Activated CD4-positive, alpha-beta memory T cell treated with anti-CD3 and anti-CD28 coated beads, Interleukin-2, amount 10 ng/mL, durations not matched to agents 7 days and 5 days (primary cell): ENCODE measurements at regions of chr17 and their contacts with region 1.

Region 1: DNA sequence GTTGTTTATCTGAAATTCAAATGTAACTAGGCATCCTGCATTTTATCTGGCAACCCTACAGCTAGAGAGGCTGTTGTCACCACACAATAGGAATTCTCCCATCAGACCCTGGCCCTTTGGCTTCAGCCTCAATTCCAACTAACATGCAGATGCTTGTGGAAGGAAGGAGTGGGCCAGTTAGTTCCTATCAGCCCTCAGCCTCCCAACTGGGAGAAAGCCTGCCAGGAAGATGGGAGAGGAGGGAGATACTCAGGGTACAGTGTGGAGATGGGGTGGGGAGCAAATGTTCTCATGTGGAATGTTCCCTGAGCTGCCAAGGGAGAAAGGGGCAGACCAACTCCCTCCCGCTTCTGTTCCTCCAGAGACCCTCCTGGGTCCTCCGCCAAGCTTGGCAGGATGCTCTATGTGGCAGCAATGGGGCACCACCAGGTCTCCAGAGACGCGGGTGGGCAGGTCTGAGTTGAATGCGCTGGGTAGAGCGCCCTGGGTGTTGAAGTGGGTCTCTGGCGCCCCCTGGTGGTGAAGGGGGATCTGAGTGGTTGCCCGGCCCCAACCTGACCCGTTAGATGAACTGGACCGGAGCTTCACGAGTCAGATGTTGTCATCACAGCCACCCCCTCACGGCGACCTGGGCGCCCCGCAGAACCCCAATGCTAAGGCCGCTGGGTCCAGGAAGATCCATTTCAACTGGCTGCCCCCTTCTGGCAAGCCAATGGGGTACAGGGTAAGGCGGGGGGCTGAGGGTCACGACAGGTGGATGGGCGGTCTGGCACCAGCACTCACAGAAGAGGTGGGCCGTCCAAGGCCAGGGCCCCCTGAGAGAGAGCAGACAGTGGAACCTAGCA is 15.2 kb downstream of the GALK1 start:
- DNase-seq: peak; percentile 88
- H3K4me3 Mint-ChIP-seq: no peak overlapping the region
- H3K27ac Mint-ChIP-seq: no peak overlapping the region
- H3K4me1 Mint-ChIP-seq: peaks cover 19% of the 10 kb centered on the region
- H3K27me3 Mint-ChIP-seq: peaks cover 9% of the 10 kb centered on the region

Region 2: GRCh38 chr17:75557075-75557882 is 192.5 kb before region 1 on chr17:
- CTCF ChIA-PET with region 1: no interaction called
- POLR2A ChIA-PET with region 1: no interaction called
- DNase-seq: no peak
- H3K4me3 Mint-ChIP-seq: no peak overlapping the region
- H3K27ac Mint-ChIP-seq: no peak overlapping the region
- H3K4me1 Mint-ChIP-seq: no peaks in the 10 kb centered on the region
- H3K27me3 Mint-ChIP-seq: no peaks in the 10 kb centered on the region

Region 3: DNA sequence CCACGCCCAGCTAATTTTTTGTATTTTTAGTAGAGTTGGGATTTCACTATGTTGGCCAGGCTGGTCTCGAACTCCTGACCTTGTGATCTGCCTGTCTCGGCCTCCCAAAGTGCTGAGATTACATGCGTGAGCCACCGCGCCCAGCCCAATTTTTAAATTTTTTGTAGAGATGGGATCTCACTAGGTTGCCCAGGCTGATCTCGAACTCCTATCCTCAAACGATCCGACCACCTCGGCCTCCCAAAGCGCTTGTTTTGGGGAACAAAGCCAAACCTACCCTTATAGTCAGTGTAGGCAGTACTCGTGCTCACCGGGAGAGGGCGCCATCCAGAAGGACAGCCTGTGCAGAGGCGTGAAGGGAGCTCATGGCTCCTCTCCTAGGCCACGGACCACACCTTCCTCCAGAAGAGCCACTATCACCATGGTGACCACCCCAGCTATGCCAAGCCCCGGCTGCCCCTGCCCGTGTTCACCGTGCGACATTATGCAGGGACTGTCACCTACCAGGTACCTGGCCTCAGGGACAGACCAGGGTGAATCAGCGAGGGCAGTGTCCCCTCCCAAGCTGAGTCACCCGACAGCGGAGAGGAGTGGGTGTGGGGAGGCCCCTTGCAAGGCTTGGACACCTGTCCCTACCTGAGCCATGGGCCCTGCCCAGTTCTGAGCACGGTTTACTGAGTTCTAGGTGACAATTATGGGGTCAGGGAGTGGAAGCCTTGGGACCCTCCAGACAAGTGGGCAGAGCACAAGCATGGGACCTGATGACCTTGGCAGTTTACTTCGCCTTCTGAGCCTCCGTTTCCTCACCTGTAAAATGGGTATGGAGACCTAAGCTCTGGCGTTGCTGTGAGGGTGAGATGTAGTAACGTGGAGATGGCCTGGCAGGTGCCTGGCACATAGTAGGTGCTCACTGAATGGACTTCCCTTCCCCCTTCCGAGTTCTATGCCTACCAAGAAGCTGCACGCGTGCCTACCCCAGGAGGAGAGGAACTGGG is 148.4 kb before region 1 on chr17:
- CTCF ChIA-PET with region 1: interaction called, 21 read pairs
- POLR2A ChIA-PET with region 1: no interaction called
- DNase-seq: peak; percentile 74
- H3K4me3 Mint-ChIP-seq: no peak overlapping the region
- H3K27ac Mint-ChIP-seq: no peak overlapping the region
- H3K4me1 Mint-ChIP-seq: peaks cover 3% of the 10 kb centered on the region
- H3K27me3 Mint-ChIP-seq: no peaks in the 10 kb centered on the region

Region 4: GRCh38 chr17:75632863-75633485 is 116.8 kb before region 1 on chr17 and contains the start of gene SMIM5:
- CTCF ChIA-PET with region 1: interaction called, 149 read pairs
- POLR2A ChIA-PET with region 1: interaction called, 4 read pairs
- DNase-seq: peak; percentile 84
- H3K4me3 Mint-ChIP-seq: no peak within 1 kb of the TSS
- H3K27ac Mint-ChIP-seq: no peak within 1 kb of the TSS
- H3K4me1 Mint-ChIP-seq: no peaks in the 10 kb centered on the region
- H3K27me3 Mint-ChIP-seq: no peaks in the 10 kb centered on the region
- total RNA-seq, gene SMIM5: not detected

Region 5: GRCh38 chr17:75679706-75680442 is 69.9 kb before region 1 on chr17:
- CTCF ChIA-PET with region 1: interaction called, 133 read pairs
- POLR2A ChIA-PET with region 1: interaction called, 3 read pairs
- DNase-seq: no peak
- H3K4me3 Mint-ChIP-seq: no peak overlapping the region
- H3K27ac Mint-ChIP-seq: peak overlapping the region; percentile 22
- H3K4me1 Mint-ChIP-seq: peaks cover 13% of the 10 kb centered on the region
- H3K27me3 Mint-ChIP-seq: no peaks in the 10 kb centered on the region

Region 6: DNA sequence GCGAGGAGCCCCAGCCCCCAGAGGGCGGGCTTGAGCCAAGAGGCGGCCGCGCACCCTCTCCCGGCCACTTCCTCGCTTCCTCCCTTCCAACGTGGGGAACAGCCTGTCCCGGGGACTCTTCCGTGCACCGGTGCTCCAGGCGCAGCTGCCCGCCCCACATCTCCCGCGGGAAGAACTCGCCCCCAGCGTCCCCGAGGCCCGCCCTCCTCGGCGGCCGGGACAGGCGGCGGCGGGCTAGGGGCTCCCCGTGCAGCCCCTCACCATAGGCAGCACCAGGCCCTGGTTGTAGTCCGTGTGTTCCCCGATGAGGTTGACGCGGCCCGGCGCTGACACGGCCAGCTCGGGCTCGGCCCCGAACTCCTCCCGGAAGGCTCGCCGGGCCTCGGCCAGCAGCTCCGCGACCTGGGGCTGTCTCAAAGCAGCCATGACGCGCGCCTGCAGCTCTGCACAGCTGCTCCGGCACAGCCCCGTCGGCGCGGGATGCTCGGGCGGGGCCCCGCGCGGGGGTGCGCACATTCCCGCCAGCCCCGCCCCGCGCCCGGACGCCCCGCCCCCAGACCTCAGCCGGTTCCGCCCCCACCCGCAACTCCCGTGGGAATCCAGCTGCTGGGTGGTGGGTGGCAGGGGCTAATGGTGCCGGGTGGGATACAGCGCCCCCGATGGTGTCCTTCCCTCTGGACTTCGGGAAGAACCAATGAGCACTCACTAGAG is 15.1 kb after region 1 on chr17 and contains the start of gene GALK1:
- CTCF ChIA-PET with region 1: interaction called, 92 read pairs
- POLR2A ChIA-PET with region 1: interaction called, 35 read pairs
- DNase-seq: peak; percentile 82
- H3K4me3 Mint-ChIP-seq: peak within 1 kb of the TSS; percentile 77
- H3K27ac Mint-ChIP-seq: peak within 1 kb of the TSS; percentile 49
- H3K4me1 Mint-ChIP-seq: peaks cover 19% of the 10 kb centered on the region
- H3K27me3 Mint-ChIP-seq: peaks cover 4% of the 10 kb centered on the region
- total RNA-seq, gene GALK1: 40.0 to 40.6 TPM

Region 7: GRCh38 chr17:75795820-75796607 is 46.2 kb after region 1 on chr17:
- CTCF ChIA-PET with region 1: interaction called, 15 read pairs
- POLR2A ChIA-PET with region 1: no interaction called
- DNase-seq: no peak
- H3K4me3 Mint-ChIP-seq: no peak overlapping the region
- H3K27ac Mint-ChIP-seq: no peak overlapping the region
- H3K4me1 Mint-ChIP-seq: peaks cover 28% of the 10 kb centered on the region
- H3K27me3 Mint-ChIP-seq: no peaks in the 10 kb centered on the region

Region 8: DNA sequence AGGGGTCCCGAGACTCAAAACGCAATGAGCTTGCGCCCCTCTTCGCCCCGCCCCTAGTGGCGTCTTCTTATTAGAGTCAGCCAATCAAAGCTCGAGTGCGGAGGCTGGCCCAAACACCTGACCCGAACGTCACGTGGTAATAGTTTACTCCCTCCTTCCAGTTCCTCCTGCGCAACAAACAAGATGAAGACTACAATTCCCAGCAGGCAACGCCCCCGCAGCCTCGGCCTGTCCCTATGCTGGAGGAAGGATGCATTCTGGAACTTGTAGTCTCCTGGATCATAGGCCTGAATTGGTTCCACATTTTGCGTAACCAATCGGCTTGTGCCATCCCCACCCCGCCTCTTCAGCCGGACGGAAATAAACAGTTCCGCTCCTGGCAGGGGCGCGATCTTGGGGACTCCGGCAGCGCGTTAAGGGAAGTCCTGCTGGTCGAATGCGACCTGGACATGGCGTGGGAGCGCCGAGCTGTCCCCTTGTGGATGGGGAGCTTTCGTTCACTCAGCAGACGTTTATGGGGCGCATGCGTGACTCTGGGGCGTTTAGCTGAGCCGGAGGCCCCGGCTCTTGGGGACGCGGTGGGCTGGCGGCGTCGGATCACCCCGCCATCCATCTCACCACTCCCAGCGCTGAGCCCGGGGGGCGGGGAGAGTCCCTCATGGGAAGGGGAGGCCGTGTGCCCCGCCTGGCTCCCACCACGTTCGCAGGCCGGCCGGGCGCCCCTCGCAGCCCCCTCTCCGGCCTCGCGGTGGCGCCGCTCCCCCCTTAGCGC is 105.7 kb after region 1 on chr17 and contains the start of gene WBP2:
- CTCF ChIA-PET with region 1: interaction called, 10 read pairs
- POLR2A ChIA-PET with region 1: interaction called, 8 read pairs
- DNase-seq: peak; percentile 98
- H3K4me3 Mint-ChIP-seq: no peak within 1 kb of the TSS
- H3K27ac Mint-ChIP-seq: peak within 1 kb of the TSS; percentile 85
- H3K4me1 Mint-ChIP-seq: peaks cover 43% of the 10 kb centered on the region
- H3K27me3 Mint-ChIP-seq: no peaks in the 10 kb centered on the region
- total RNA-seq, gene WBP2: 107 to 114 TPM